ENCODE measurements at regions of chr2 and their contacts with region 1.

Region 1: GRCh38 chr2:233443468-233444183 is 89.3 kb downstream of the DGKD start:
- DNase-seq: peak; percentile 81 to 87 (median 85)
- ATAC-seq: peak; percentile 91
- H3K4me3 ChIP-seq: no peak overlapping the region
- H3K4me1 ChIP-seq: no peaks in the 10 kb centered on the region
- CTCF ChIP-seq: peak; percentile 57

Region 2: DNA sequence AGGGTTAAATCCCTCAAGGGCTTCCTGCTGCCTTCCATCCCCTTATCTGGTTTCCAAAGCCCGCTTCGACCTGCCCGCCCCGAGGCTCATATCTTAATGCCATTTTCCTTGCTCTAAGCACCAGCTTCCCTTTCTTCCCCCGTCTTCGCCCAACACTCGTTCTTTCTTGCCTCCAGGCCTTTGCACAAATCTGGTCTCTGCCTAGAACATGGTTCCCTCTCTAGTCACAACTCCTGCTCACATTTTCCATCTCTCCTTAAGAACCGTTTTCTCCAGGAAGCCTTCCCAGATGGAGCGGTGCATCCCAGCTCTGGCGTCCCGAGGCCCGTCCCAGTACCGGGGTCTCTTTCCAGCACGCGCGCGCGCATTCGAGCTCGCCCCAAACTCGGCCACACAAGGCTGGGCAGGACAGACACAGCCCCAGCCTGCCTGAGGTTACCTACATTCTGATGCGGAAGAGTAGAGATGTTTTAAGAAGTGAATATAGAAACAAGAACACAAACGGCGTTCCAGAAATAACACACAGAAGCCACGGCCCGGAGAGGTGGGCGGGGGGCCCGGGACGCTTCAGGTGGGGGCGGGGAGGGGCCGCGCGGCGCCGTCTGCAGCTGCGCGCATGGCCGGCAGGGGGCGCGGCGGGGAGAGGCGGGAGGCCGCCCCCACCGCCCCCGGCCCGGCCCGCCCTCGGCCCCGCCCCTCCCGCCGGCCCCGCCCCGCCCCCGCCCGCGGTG is 89.7 kb before region 1 on chr2 and contains the start of gene DGKD:
- intact Hi-C with region 1: loop called (anchors 5 to 10 kb)
- DNase-seq: peak; percentile 74 to 83 (median 82)
- ATAC-seq: peak; percentile 87
- H3K4me3 ChIP-seq: peak within 1 kb of the TSS; percentile 44
- H3K4me1 ChIP-seq: peaks cover 34% of the 10 kb centered on the region
- CTCF ChIP-seq: no peak
- total RNA-seq, gene DGKD: 81.8 to 159 (median 102) TPM

Region 3: GRCh38 chr2:233402346-233402745 is 41.3 kb before region 1 on chr2:
- intact Hi-C with region 1: loop called in 1 of 2 experiments (anchors 2 kb)
- DNase-seq: no peak
- ATAC-seq: peak; percentile 3
- H3K4me3 ChIP-seq: no peak overlapping the region
- H3K4me1 ChIP-seq: peaks cover 9% of the 10 kb centered on the region
- CTCF ChIP-seq: no peak